Activated naive CD4-positive, alpha-beta T cell treated with anti-CD3 and anti-CD28 coated beads for 36 hours (primary cell): ENCODE measurements at regions of chr10 and their contacts with region 1.

Region 1: DNA sequence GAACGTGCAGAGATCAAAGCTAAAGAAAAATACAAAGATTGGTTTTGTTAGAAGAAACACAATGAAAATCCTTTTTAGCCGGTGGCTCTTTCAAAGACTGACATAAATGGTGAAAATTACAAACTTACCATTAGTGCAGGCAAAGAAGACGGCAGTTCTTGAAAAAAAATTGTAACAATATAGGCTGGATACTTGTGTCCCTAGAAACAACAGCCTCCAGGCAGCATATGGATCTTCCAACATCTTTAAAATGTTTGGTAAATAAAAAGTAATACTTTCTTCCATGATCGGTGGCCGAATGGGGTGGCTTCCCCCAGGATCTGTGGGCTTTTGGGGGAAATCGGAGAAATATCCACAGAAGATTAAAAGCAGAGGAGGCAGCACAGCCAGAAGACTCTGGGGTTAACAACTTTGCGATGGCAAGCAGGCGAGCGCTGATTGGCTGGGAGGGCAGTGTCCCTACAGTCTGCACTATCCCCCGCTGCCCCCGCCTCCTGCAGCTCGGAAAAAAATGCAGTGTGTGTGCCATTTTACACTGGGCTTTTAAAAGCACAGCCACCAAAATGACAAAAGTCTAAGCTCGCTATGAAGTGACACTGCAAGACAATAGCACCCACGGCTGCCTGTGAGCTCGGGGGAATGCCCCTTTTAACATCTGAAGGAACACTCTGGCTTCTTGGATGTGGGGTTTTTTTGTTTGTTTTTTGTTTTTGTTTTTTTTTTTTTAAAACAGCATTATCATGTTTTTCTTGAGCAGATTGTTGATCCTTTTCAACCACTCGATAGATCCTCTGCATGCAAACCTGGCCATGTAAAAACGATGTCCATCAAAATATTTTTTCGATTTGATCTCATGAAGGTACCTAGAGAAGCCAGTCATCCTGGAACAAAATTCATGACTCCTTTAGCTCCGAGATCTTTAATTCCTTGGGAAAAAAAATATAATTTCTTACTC is 31.7 kb upstream of the EPC1 start:
- DNase-seq: peak; percentile 97
- H3K4me3 Mint-ChIP-seq: no peak overlapping the region
- H3K27ac Mint-ChIP-seq: no peak overlapping the region
- H3K4me1 Mint-ChIP-seq: peaks cover 13% of the 10 kb centered on the region
- H3K27me3 Mint-ChIP-seq: no peaks in the 10 kb centered on the region

Region 2: DNA sequence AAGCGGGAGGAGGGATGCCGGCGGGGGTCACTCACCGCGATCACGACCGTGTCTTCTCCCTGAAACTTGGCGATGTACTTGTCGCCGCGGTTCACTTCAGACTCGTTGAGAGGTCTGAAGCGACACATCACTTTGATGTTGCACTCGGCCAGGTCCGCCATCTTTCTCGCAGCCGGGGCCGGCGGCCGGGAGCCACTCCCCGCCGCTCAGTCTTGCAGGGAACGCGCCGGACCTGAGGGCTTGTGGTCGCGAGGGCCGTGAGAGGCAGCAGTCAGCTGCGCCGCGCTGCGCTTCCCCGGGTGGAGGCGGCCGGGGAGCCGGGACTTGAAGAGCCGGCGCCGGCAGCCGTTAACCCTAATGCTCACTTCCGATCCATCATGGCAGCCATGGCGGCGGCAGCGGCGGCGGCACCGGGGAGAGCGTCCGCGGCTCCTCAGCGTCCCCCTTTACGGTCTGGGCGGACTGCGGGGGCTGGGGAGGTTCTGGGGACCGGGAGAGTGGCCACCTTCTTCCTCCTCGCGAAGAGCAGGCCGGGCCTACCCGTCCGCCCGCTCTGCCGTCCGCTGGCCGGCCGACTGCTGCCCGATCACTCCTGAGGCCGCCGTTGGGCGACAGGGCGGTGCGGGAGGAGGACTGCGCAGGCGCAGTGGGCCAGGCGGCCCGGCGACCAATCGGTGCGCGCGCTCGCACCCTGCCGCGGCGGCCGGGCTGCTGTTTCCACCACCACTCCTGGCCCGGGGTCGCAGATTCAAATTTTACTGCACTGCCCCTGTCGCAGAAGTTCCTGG is 322.6 kb before region 1 on chr10 and contains the start of gene KIF5B:
- CTCF ChIA-PET with region 1: no interaction called
- intact Hi-C with region 1: loop called (anchors 2 kb)
- DNase-seq: peak; percentile 84
- H3K4me3 Mint-ChIP-seq: peak within 1 kb of the TSS; percentile 96
- H3K27ac Mint-ChIP-seq: peak within 1 kb of the TSS; percentile 92
- H3K4me1 Mint-ChIP-seq: peaks cover 39% of the 10 kb centered on the region
- H3K27me3 Mint-ChIP-seq: no peaks in the 10 kb centered on the region
- total RNA-seq, gene KIF5B: 64.9 to 67.8 TPM

Region 3: DNA sequence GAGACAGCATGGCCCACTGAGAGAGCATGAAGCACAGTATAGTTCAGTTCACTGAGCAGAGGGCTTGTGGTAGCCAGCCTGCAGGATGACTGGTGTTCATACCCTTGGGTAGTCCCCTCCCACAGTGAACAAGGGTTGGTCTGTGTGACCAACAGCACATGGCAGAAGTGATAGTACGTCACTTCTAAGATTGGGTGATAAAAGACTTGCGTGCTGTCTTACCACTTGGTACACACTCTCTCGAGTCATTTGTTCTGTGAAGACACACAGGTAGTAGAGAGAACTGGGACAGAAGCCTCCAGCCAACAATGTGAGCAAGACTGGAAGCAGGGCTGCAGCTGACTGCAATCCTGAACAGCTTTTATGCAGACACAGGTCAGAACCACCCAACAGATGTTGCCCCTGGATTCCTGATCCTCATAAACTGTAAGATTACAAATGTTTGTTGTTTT is 46.3 kb before region 1 on chr10:
- CTCF ChIA-PET with region 1: interaction called, 3 read pairs
- intact Hi-C with region 1: loop called (anchors 1 kb)
- DNase-seq: peak; percentile 89
- H3K4me3 Mint-ChIP-seq: peak overlapping the region; percentile 55
- H3K27ac Mint-ChIP-seq: peak overlapping the region; percentile 90
- H3K4me1 Mint-ChIP-seq: peaks cover 94% of the 10 kb centered on the region
- H3K27me3 Mint-ChIP-seq: no peaks in the 10 kb centered on the region

Region 4: GRCh38 chr10:32413513-32413912 is 34.9 kb after region 1 on chr10:
- CTCF ChIA-PET with region 1: no interaction called
- intact Hi-C with region 1: loop called (anchors 1 kb)
- DNase-seq: peak; percentile 65
- H3K4me3 Mint-ChIP-seq: no peak overlapping the region
- H3K27ac Mint-ChIP-seq: no peak overlapping the region
- H3K4me1 Mint-ChIP-seq: peaks cover 9% of the 10 kb centered on the region
- H3K27me3 Mint-ChIP-seq: no peaks in the 10 kb centered on the region

Region 5: DNA sequence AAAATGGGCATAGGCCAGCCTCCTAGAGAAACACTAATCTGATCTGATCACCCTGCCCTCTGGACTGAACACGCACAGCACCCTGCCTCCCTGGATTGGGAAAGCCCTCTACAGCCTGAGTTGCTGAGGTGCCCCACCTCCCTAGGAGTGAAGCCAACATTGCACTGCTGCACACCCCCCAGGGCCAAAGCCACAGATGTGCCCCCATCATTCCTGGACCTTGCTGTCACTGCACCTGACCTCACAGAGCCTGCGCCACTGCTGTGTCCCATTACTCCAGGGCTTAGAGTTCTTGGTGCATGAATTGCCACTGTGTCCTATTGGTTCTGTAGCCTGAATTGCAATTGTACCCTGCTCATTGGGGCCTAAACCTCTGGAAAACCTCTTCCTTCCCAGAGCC is 477.7 kb after region 1 on chr10:
- CTCF ChIA-PET with region 1: no interaction called
- intact Hi-C with region 1: no loop called
- DNase-seq: peak; percentile 3
- H3K4me3 Mint-ChIP-seq: no peak overlapping the region
- H3K27ac Mint-ChIP-seq: no peak overlapping the region
- H3K4me1 Mint-ChIP-seq: no peaks in the 10 kb centered on the region
- H3K27me3 Mint-ChIP-seq: no peaks in the 10 kb centered on the region